SK-N-SH (cell line): ENCODE measurements at regions of chr7 and their contacts with region 1.

Region 1: DNA sequence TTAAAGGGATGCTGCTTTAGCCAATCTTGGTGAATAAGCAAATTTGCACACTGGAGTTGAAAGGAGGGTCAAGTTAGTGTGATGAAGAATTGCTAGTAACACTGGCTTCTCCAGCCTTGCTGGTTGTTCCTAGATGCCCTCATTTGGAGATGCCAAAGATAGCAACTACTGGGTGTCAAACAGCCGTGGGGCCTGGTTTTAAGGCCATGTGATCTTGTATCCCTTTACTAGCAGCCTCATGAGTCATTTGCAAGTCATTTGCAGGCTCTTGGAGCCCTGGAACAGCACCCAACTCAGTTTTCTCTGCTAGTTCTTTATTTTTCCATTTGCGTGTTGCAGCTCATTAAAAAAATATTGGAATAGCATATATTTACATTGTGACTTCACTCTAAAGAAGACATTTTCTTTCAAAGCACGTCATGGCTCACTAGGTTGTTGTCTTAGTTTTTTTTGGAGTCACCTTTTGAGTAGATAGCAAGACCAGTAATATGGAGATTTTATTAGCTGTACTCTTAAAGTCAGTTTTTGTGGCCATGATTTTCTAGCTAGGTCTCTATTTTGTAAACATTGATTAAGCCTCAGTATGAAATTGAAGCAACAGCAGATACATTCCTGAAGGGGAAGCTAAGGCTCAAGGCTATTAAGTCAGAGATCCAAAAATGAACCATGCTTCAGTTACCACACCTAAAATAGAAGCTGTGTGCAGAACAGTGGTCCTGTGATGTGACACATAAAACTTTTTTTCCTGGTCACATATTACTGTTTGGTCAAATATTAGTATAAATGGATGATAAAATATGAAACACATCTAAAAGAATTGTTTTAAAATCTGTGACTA is 1.3 kb downstream of the LSMEM1 start:
- DNase-seq: no peak
- H3K4me3 ChIP-seq: no peak overlapping the region
- H3K27ac ChIP-seq: peak overlapping the region; percentile 61 to 90; a peak in 3 of 4 replicates
- H3K4me1 ChIP-seq: peaks cover 17 to 27% of the 10 kb centered on the region in 2 experiments
- H3K27me3 ChIP-seq: no peaks in the 10 kb centered on the region
- CTCF ChIP-seq: no peak
- EP300 ChIP-seq: peak in 1 of 2 experiments; percentile 45; a peak in 1 of 4 replicates
- RAD21 ChIP-seq: no peak

Region 2: DNA sequence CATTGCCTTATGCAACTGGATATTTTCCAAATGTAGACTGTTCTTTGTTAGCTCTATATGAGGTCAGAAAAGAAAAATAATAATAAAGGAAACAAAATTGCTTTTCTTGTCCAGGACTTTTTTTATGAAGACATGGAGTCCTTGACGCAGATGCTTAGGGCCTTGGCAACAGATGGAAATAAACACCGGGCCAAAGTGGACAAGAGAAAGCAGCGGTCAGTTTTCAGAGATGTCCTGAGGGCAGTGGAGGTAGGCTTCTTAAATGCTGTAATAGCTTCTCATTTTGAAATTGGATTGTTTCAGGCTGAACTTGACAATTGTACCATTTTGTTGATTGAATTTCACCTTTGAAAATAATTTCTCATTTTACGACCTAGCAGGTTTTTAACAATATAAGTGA is 14.2 kb before region 1 on chr7:
- CTCF ChIA-PET with region 1: interaction called, 11 read pairs
- POLR2A ChIA-PET with region 1: no interaction called
- DNase-seq: no peak
- H3K4me3 ChIP-seq: no peak overlapping the region
- H3K27ac ChIP-seq: no peak overlapping the region
- H3K4me1 ChIP-seq: no peaks in the 10 kb centered on the region; a peak in 1 of 4 replicates
- H3K27me3 ChIP-seq: no peaks in the 10 kb centered on the region
- CTCF ChIP-seq: no peak
- EP300 ChIP-seq: no peak
- RAD21 ChIP-seq: no peak

Region 3: DNA sequence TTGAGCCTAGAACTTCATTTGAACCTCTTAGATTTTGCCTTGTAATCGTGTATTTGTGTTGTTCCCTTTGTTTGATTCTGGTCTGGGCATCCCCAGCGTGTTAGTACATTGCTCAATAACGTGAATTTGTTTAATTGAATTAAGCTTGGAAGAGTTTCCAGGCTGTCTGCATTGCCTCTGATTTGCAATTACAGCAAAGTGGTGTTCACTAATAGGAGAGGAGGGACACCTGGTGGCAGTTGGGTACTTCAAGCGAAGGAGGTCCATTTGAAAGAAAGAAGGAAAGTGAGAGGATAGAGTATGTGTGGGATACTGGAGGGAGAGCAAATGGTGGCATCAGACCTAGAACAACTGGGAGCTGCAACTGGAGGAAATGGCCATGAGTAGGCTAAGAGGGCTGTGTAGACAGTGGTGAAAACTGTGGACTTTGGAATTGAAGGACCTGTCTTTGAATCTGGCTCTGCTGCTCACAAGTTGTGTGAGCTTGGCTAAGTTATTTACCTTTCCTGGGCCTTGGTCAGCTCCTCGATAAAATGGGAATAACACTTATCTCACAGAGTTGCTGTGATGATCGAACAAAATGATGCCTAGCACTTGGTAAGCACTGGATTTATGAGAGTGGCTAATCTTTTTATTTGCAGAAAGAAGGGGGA is 13.9 kb after region 1 on chr7:
- CTCF ChIA-PET with region 1: interaction called, 28 read pairs
- POLR2A ChIA-PET with region 1: no interaction called
- DNase-seq: peak; percentile 57
- H3K4me3 ChIP-seq: no peak overlapping the region
- H3K27ac ChIP-seq: peak overlapping the region; percentile 35 to 70; a peak in 2 of 4 replicates
- H3K4me1 ChIP-seq: peaks cover 5 to 11% of the 10 kb centered on the region in 2 experiments; a peak in 3 of 4 replicates
- H3K27me3 ChIP-seq: no peaks in the 10 kb centered on the region
- CTCF ChIP-seq: peak; percentile 83
- EP300 ChIP-seq: no peak
- RAD21 ChIP-seq: peak; percentile 90